Caco-2 (cell line): ENCODE measurements at regions of chr10 and their contacts with region 1.

Region 1: GRCh38 chr10:32055813-32056600 is at the start of gene KIF5B:
- DNase-seq: peak; percentile 91 to 97
- H3K4me3 ChIP-seq: peak within 1 kb of the TSS; percentile 97
- H3K4me3 Mint-ChIP-seq: peak within 1 kb of the TSS; percentile 98
- H3K27ac Mint-ChIP-seq: peak within 1 kb of the TSS; percentile 90
- H3K4me1 ChIP-seq: peaks cover 58% of the 10 kb centered on the region
- H3K4me1 Mint-ChIP-seq: peaks cover 33% of the 10 kb centered on the region
- H3K27me3 ChIP-seq: no peaks in the 10 kb centered on the region
- H3K27me3 Mint-ChIP-seq: no peaks in the 10 kb centered on the region
- CTCF ChIP-seq: no peak
- total RNA-seq, gene KIF5B: 172 and 183 TPM in 2 replicates

Region 2: DNA sequence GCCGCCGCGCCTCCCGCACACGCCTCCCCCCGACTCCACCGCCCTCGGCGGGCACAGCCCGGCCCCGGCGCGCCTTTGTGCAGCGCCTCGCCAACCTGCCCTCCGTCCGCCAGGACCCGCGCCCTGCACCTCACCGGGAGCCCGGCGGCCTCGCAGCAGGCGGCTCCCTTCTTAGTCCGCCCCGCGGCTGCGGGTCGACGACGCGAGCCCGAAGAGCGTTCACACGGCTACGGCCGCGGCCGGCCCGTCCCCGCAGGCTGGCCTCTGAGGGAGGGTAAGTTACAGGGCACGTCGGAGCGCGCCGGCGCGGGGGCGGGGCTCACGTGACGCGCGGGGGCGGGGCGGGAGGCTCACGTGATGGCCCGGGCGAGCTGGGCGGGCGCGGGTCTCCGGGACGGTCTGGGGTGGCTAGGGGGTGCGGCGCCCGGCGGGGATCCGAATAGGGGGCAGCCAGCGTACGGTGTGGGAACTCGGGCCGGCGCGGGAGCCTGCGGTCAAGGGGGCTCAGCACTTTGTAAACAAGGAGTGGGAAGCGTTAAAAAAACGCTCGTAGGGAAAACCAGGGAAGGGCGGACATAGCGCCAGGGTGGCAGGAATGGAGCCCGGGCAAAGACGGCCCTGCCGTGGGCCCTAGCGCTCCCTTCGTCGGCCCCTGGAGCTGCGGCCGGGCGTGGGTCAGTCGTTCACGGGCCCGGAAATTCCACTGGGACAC is 127.3 kb before region 1 on chr10 and contains the start of gene ARHGAP12:
- CTCF ChIA-PET with region 1: no interaction called
- POLR2A ChIA-PET with region 1: no interaction called
- intact Hi-C with region 1: loop called (anchors 2 kb)
- DNase-seq: peak; percentile 95 to 99
- H3K4me3 ChIP-seq: peak within 1 kb of the TSS; percentile 80
- H3K4me3 Mint-ChIP-seq: peak within 1 kb of the TSS; percentile 76
- H3K27ac Mint-ChIP-seq: peak within 1 kb of the TSS; percentile 97
- H3K4me1 ChIP-seq: peaks cover 12% of the 10 kb centered on the region; the same call in 1 of the 2 replicates
- H3K4me1 Mint-ChIP-seq: peaks cover 40% of the 10 kb centered on the region
- H3K27me3 ChIP-seq: no peaks in the 10 kb centered on the region
- H3K27me3 Mint-ChIP-seq: no peaks in the 10 kb centered on the region
- CTCF ChIP-seq: no peak
- total RNA-seq, gene ARHGAP12: 62.3 and 63.1 TPM in 2 replicates

Region 3: GRCh38 chr10:32084185-32084851 is 28.3 kb after region 1 on chr10:
- CTCF ChIA-PET with region 1: no interaction called
- POLR2A ChIA-PET with region 1: no interaction called
- intact Hi-C with region 1: loop called (anchors 2 kb)
- DNase-seq: no peak
- H3K4me3 ChIP-seq: no peak overlapping the region
- H3K4me3 Mint-ChIP-seq: no peak overlapping the region
- H3K27ac Mint-ChIP-seq: no peak overlapping the region
- H3K4me1 ChIP-seq: no peaks in the 10 kb centered on the region
- H3K4me1 Mint-ChIP-seq: no peaks in the 10 kb centered on the region
- H3K27me3 ChIP-seq: no peaks in the 10 kb centered on the region
- H3K27me3 Mint-ChIP-seq: no peaks in the 10 kb centered on the region
- CTCF ChIP-seq: no peak

Region 4: GRCh38 chr10:32095116-32095733 is 39.2 kb after region 1 on chr10:
- CTCF ChIA-PET with region 1: no interaction called
- POLR2A ChIA-PET with region 1: no interaction called
- intact Hi-C with region 1: loop called (anchors 1 kb)
- DNase-seq: peak; percentile 70 to 83
- H3K4me3 ChIP-seq: no peak overlapping the region
- H3K4me3 Mint-ChIP-seq: no peak overlapping the region
- H3K27ac Mint-ChIP-seq: peak overlapping the region; percentile 68
- H3K4me1 ChIP-seq: peaks cover 21% of the 10 kb centered on the region
- H3K4me1 Mint-ChIP-seq: peaks cover 21% of the 10 kb centered on the region
- H3K27me3 ChIP-seq: no peaks in the 10 kb centered on the region
- H3K27me3 Mint-ChIP-seq: no peaks in the 10 kb centered on the region
- CTCF ChIP-seq: peak in 1 of 2 experiments; percentile 36

Region 5: DNA sequence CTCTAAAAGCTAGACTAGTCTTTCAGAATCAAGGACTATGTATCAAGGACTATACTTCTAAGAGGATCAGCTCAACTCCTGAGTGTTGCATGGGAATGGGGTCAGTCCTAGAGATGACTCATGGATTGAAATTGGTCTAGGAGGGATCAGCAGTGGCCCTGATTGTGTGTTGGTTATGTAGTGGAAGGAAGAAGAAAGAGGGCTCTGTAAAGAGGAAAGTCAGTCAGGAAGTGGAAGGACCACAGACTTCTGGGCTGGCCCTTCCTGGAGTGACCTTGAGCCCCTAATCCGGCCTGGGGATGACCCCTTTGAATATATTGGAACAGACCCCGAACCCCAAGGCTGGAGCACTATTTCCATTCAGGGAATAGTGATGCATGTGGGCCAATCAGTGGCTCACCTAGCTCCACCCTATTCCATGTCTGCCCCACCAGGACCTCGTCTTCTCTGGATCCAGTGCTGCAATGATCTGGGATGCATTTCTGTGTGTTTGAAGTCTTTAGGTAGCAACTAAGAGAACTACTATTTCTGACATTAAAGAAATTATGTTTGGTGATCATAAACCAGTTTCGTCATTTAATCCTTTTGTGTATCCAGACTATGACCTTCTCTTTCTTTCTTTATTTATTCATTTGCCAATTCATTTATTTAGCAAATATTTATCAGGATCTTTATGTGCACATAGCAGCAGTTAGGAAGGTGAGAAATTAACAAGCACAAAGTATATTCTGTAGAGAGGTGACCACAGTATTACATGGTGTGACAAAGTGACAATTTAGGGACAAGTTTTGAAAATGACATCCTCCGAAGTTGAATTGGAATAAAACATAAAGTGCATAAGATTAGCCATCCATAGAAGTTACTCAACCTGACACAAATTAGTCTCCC is 48.9 kb after region 1 on chr10:
- CTCF ChIA-PET with region 1: no interaction called
- POLR2A ChIA-PET with region 1: no interaction called
- intact Hi-C with region 1: loop called (anchors 1 kb)
- DNase-seq: no peak
- H3K4me3 ChIP-seq: no peak overlapping the region
- H3K4me3 Mint-ChIP-seq: no peak overlapping the region
- H3K27ac Mint-ChIP-seq: no peak overlapping the region
- H3K4me1 ChIP-seq: peaks cover 27% of the 10 kb centered on the region
- H3K4me1 Mint-ChIP-seq: peaks cover 18% of the 10 kb centered on the region
- H3K27me3 ChIP-seq: no peaks in the 10 kb centered on the region
- H3K27me3 Mint-ChIP-seq: no peaks in the 10 kb centered on the region
- CTCF ChIP-seq: no peak

Region 6: GRCh38 chr10:32131388-32131787 is 75.4 kb after region 1 on chr10:
- CTCF ChIA-PET with region 1: no interaction called
- POLR2A ChIA-PET with region 1: no interaction called
- intact Hi-C with region 1: loop called (anchors 1 kb)
- DNase-seq: peak; percentile 70
- H3K4me3 ChIP-seq: no peak overlapping the region
- H3K4me3 Mint-ChIP-seq: peak overlapping the region; percentile 50
- H3K27ac Mint-ChIP-seq: peak overlapping the region; percentile 43
- H3K4me1 ChIP-seq: peaks cover 33% of the 10 kb centered on the region
- H3K4me1 Mint-ChIP-seq: peaks cover 14% of the 10 kb centered on the region
- H3K27me3 ChIP-seq: no peaks in the 10 kb centered on the region
- H3K27me3 Mint-ChIP-seq: no peaks in the 10 kb centered on the region
- CTCF ChIP-seq: no peak